Cardiac septum (tissue), 1 donor: ENCODE measurements at regions of chr2 and their contacts with region 1.

Region 1: DNA sequence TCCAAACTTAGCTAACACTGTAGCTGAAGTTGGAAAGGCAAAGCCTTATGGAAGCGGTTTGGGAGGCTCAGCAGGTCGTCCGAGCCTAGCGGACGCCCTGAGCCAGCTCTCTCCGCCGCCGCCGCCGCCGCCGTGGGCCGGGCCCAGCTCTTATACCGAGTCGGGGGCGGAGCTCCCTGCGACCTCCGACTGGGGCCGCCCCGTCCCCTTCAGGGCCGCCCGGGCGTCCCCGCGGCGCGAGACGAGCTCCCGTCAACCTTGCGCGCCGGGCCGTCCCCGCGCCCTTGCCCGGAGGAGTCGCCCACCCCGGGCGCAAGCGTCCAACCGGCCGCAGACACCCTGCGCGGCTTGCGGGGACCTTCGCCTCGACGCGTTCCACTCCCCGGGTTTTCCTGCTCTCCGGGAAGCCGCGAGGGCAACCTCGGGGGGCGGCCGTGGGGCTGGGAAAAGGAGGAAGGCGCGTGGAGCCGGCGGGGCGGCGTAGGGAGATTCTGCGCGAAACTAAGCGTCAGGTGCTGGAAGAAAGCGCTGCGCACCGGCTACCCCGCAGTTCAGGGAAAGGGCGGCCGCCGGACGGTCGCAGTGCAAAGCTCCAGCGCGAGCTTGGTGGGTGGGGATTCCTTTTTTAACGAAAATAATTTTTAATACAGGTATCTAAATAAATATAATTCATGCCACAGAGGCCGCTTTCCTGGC is at the start of gene SLC40A1:
- DNase-seq: peak; percentile 93
- total RNA-seq, gene SLC40A1: 30.3 TPM

Region 2: DNA sequence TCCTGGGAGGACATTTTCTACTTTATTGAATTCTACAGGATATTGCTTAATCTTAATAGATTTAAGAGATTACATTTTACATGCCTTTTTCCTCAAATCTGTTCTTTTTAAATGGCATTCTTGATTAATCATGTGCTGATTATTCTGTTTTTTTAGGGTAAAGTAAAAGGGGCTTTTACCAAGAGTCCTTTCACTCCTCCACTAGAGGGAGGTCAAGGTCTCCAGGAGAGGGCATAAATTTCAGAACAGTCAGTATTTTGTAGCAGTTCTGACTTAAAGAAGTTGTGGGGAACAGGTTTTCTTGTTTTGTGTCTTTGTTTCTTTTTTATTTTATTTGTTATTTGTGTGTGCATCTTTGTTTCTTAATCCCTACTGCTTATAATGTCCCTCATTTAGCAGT is 114.1 kb before region 1 on chr2:
- intact Hi-C with region 1: loop called (anchors 5 kb)
- DNase-seq: no peak

Region 3: GRCh38 chr2:189613077-189613636 is 32.4 kb after region 1 on chr2:
- intact Hi-C with region 1: loop called (anchors 1 kb)
- DNase-seq: no peak

Region 4: DNA sequence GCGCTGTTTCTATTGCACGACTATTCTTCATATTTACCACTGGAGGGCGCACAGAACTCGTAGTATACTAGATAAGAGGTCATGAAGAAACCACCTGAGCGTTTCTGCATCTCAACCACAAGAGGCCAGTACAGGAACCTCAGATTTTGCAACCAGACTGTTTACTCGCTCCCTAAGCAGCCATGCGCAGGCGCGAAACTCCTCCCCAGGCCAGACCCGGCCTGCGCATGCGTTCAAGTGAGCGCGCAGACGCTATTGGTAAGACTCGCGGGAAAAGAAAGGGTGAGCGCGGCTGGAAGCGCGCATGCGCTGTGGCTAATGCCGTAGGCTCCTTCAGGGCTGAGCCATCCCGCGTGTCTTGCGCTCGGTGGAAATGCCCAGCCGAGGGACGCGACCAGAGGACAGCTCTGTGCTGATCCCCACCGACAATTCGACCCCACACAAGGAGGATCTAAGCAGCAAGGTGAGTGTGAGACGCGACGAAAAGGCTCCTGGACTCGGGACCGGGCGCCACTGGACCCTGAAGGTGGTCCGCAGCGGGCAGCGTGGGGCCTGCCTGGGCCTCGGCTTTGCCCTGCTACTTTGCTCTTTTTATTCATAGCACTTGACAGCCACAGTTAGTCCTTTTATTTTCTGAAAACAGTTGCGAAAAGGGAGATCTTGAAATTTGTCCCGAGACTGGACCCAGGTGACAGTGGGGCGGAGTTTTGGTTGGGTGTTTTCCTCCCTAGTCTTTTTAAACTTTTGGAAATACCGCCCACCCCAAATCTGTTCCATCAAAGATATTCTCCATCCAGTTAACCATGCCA is 80.5 kb after region 1 on chr2 and contains the start of gene ASNSD1:
- intact Hi-C with region 1: loop called (anchors 5 kb)
- DNase-seq: peak; percentile 99
- total RNA-seq, gene ASNSD1: 27.7 TPM